Uterus (tissue), 4 donors: ENCODE measurements at regions of chr4 and their contacts with region 1.

Region 1: DNA sequence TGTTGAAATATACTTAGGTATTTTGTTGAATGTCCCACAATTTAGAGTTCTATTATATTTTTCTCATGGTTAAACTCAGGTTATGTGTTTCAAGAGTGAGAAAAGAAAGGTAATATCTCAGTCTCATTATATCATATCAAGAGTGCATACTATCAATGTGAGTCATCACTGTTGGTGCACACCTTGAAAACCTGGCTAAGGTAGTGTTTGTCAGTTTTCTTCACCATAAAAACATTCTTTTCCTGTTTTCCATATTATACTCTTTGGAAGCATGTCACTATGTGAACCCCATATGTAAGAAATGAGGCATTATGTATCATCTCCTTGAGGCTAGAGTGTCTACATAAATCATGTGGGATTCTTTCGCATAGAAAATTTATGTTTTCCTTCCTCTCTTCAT is 307.6 kb upstream of the CTSO start:
- DNase-seq: no peak
- H3K4me3 ChIP-seq: no peak overlapping the region
- H3K27ac ChIP-seq: no peak overlapping the region
- H3K4me1 ChIP-seq: no peaks in the 10 kb centered on the region
- H3K27me3 ChIP-seq: no peaks in the 10 kb centered on the region
- CTCF ChIP-seq: no peak
- POLR2A ChIP-seq: no peak

Region 2: DNA sequence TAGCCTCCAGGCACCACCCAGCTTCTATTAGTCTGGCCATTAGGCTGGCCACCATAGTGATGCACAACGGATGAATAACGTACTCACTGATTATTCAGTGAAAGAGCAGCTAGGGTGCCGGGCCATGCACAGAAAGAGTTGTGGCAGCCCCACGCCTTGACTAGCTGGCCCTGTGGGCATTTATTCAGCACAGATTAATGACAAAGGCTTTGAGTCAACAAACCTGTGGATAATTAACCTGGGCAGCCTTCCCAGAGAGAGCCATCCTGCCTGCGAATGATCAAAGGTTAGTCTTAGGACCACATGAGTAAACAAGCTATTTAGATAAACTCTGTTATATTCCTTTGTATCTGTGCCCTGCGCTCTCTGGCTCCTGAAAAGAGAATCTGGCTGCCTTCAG is 921.6 kb before region 1 on chr4:
- intact Hi-C with region 1: loop called (anchors 10 kb)
- DNase-seq: no peak
- H3K4me3 ChIP-seq: no peak overlapping the region
- H3K27ac ChIP-seq: no peak overlapping the region
- H3K4me1 ChIP-seq: no peaks in the 10 kb centered on the region
- H3K27me3 ChIP-seq: no peaks in the 10 kb centered on the region
- CTCF ChIP-seq: no peak
- POLR2A ChIP-seq: no peak

Region 3: GRCh38 chr4:155529272-155529671 is 732.0 kb before region 1 on chr4:
- intact Hi-C with region 1: no loop called
- DNase-seq: no peak
- H3K4me3 ChIP-seq: no peak overlapping the region
- H3K27ac ChIP-seq: peak overlapping the region in 1 of 2 donors; percentile 38
- H3K4me1 ChIP-seq: peaks cover 0 to 9% of the 10 kb centered on the region in 2 donors
- H3K27me3 ChIP-seq: no peaks in the 10 kb centered on the region
- CTCF ChIP-seq: peak in 2 of 4 experiments; percentile 15 to 35
- POLR2A ChIP-seq: no peak

Region 4: GRCh38 chr4:155703486-155704247 is 557.6 kb before region 1 on chr4:
- intact Hi-C with region 1: no loop called
- DNase-seq: no peak
- H3K4me3 ChIP-seq: no peak overlapping the region
- H3K27ac ChIP-seq: no peak overlapping the region
- H3K4me1 ChIP-seq: no peaks in the 10 kb centered on the region
- H3K27me3 ChIP-seq: no peaks in the 10 kb centered on the region
- CTCF ChIP-seq: no peak
- POLR2A ChIP-seq: no peak

Region 5: DNA sequence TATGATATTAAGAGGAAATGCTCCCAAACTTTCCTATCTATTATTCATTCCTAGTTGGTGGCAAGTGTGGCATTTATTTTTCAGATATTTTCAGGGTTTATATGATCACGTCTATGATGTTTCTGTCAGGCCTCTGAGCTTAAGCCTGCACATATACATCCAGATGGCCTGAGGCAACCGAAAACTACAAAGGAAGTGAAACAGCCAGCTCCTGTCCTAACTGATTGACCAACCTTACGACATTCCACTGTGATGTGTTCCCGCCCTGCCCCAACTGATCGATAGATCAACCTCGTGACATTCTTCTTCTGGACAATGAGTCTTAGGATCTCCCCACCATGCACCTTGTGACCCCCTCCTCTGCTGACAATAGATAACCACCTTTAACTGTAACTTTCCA is 239.9 kb before region 1 on chr4:
- intact Hi-C with region 1: no loop called
- DNase-seq: no peak
- H3K4me3 ChIP-seq: no peak overlapping the region
- H3K27ac ChIP-seq: no peak overlapping the region
- H3K4me1 ChIP-seq: no peaks in the 10 kb centered on the region
- H3K27me3 ChIP-seq: no peaks in the 10 kb centered on the region
- CTCF ChIP-seq: no peak
- POLR2A ChIP-seq: no peak

Region 6: DNA sequence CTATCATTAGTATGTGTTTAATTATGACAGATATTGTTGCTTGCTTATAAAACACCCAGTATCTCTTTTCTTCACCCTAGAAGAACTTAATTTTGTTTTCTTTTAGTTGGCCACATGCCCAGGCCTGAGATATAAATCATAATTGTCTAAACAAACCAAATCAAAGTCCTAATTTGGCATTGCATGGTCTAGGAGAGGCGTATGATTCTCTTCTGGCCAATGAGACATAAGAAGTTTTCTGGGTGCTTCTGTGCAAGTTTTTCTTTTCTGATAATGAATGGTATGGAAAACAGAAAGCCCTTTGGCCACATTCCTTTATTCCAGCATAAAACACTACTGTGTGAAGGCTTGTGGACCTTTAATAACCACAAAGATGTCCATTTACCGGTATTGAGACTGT is 114.7 kb before region 1 on chr4:
- intact Hi-C with region 1: no loop called
- DNase-seq: no peak
- H3K4me3 ChIP-seq: no peak overlapping the region
- H3K27ac ChIP-seq: no peak overlapping the region
- H3K4me1 ChIP-seq: no peaks in the 10 kb centered on the region
- H3K27me3 ChIP-seq: no peaks in the 10 kb centered on the region
- CTCF ChIP-seq: no peak
- POLR2A ChIP-seq: no peak